AG04450 (cell line): ENCODE measurements at regions of chr17 and their contacts with region 1.

Region 1: DNA sequence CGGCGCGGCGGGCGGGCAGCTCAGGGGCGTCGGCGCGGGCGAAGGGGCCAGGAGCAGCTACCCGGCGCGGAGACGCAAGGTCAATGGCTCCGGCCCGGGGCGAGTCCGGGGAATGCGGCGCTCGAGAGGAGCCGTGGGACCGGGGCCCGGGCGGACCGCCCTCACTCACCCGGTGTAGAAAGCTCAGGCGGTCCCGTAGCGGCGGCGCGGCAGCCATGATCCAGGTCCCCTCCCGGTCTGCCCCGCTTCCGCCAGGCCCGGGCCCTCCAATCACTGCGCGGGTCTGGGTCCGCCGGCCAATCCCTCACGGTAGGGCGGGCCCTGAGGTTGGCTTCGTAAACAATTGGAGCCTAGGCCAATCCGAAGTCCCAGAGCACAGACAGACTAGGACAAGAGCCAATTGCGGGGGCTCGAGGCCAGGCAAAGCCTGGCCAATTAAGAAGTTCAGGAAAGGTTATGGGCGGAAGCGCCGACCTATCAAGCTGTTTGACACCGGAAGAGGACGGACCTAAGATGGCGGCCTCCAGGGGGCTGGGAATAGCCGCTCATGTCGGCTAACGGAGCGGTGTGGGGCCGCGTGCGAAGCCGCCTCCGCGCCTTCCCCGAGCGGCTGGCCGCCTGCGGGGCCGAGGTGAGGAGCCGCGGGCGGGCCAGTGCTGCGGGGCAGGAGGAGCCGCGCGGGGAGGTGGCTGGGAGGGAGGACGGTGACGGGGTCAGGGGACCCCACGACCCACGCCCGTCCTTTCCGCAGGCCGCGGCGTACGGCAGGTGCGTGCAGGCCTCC is at the starts of genes NDUFAF8 and TEPSIN:
- DNase-seq: peak; percentile 99
- H3K4me3 ChIP-seq: peak within 1 kb of the TSS; percentile 93
- H3K27ac ChIP-seq: peak within 1 kb of the TSS; percentile 21
- H3K27me3 ChIP-seq: no peaks in the 10 kb centered on the region
- CTCF ChIP-seq: no peak
- polyA plus RNA-seq, gene NDUFAF8: 133 and 181 TPM in 2 replicates
- polyA plus RNA-seq, gene TEPSIN: 7.5 and 10.0 TPM in 2 replicates

Region 2: GRCh38 chr17:81222906-81223761 is 15.9 kb before region 1 on chr17 and contains the start of gene CEP131:
- CTCF ChIA-PET with region 1: no interaction called
- POLR2A ChIA-PET with region 1: interaction called, 17 read pairs
- DNase-seq: peak; percentile 94
- H3K4me3 ChIP-seq: peak within 1 kb of the TSS; percentile 76
- H3K27ac ChIP-seq: peak within 1 kb of the TSS; percentile 21
- H3K27me3 ChIP-seq: no peaks in the 10 kb centered on the region
- CTCF ChIP-seq: no peak
- polyA plus RNA-seq, gene CEP131: 2.2 and 3.0 TPM in 2 replicates